Aorta (tissue), 5 donors: ENCODE measurements at regions of chr6 and their contacts with region 1.

Region 1: DNA sequence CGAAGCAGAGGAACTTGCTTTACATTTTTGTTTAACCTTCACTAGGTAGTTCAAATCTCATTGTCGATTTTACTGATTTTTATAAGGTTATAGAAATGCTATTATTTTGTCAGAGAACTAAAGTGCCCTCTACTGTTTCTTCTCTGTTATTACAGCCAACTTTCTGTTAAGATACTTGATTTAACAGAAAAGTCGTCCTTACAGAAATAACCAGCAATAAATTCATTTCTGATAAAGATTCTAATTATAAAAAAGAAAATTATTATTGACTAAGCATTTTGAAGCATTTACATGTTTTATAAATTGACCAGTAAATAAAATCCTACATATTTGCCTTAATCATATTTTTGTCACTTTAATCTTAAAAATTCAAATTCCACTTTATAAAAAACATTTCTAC is 60.8 kb downstream of the OGFRL1 start:
- DNase-seq: no peak
- ATAC-seq: peak; percentile 74
- H3K4me3 ChIP-seq: no peak overlapping the region
- H3K27ac ChIP-seq: no peak overlapping the region
- H3K4me1 ChIP-seq: peaks cover 0 to 13% of the 10 kb centered on the region in 2 donors
- H3K27me3 ChIP-seq: no peaks in the 10 kb centered on the region

Region 2: GRCh38 chr6:71012866-71013469 is 336.4 kb before region 1 on chr6:
- intact Hi-C with region 1: loop called in 1 of 2 experiments (anchors 10 kb)
- DNase-seq: no peak
- ATAC-seq: peak; percentile 77
- H3K4me3 ChIP-seq: no peak overlapping the region
- H3K27ac ChIP-seq: no peak overlapping the region
- H3K4me1 ChIP-seq: no peaks in the 10 kb centered on the region
- H3K27me3 ChIP-seq: no peaks in the 10 kb centered on the region

Region 3: DNA sequence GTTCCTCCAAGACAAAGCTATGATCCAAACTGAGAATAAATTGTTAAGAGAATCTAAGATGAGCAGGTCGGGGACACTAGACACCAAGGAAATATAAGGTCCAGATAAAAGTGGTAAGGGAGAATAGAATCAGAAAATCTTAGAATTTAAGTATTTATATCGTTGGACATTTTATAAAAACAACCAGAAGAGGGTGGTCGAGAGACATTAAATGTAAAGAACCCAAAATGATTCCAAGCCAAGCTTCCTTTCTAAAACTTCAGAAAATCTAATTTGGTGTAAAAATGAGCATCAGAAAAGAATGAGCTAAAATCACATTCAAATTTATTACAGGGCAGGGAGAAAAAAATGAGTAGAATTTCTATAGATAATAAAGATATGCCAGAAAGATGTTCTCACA is 158.6 kb before region 1 on chr6:
- intact Hi-C with region 1: loop called (anchors 2 to 5 kb)
- DNase-seq: no peak
- ATAC-seq: no peak
- H3K4me3 ChIP-seq: no peak overlapping the region
- H3K27ac ChIP-seq: no peak overlapping the region
- H3K4me1 ChIP-seq: peaks cover 0 to 2% of the 10 kb centered on the region in 2 donors
- H3K27me3 ChIP-seq: no peaks in the 10 kb centered on the region

Region 4: DNA sequence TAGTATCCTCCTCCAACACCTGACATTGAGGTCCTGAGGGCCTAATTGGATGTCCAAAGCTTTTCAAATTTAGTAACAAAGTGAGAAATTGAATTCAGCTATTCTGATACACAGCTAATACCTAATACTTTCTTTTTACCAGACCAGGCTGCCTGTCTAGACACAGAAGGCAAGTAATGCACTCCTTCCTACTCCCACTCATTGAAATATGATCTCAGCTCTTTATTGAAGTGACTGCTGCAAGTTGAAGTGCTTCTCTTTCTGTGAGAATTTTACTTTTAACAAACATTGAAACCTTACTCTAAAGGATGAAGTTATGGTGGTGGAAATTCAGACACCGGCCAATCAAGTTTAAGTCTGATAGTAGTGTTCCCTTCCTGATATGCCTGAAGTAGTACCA is 151.6 kb before region 1 on chr6:
- intact Hi-C with region 1: loop called in 1 of 2 experiments (anchors 5 kb)
- DNase-seq: no peak
- ATAC-seq: no peak
- H3K4me3 ChIP-seq: peak overlapping the region in 1 of 2 donors; percentile 5
- H3K27ac ChIP-seq: no peak overlapping the region
- H3K4me1 ChIP-seq: no peaks in the 10 kb centered on the region
- H3K27me3 ChIP-seq: no peaks in the 10 kb centered on the region

Region 5: DNA sequence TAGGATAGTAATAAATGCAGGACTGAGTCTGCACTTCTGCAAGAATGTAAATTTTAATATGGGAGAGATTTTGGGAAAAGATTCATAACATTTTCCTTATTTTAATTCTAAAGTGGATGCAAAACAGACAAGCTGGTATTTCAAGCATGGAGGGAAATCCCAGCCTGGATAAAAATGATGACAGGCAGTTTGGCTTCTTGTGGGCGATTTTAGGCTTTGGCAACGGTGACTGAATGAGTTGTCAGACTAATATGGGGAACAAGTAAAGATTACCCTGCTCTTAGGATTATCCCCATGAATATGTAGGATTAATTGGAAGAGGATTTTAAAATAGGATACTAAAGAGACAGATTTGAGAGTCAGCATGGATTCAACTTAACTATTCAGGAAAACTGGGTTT is 39.7 kb before region 1 on chr6:
- intact Hi-C with region 1: no loop called
- DNase-seq: no peak
- ATAC-seq: no peak
- H3K4me3 ChIP-seq: no peak overlapping the region
- H3K27ac ChIP-seq: no peak overlapping the region
- H3K4me1 ChIP-seq: no peaks in the 10 kb centered on the region
- H3K27me3 ChIP-seq: no peaks in the 10 kb centered on the region

Region 6: GRCh38 chr6:71404145-71404966 is 55.0 kb after region 1 on chr6:
- intact Hi-C with region 1: no loop called
- DNase-seq: no peak
- ATAC-seq: peak; percentile 38
- H3K4me3 ChIP-seq: peak overlapping the region in 1 of 2 donors; percentile 14
- H3K27ac ChIP-seq: no peak overlapping the region
- H3K4me1 ChIP-seq: peaks cover 3 to 6% of the 10 kb centered on the region in 2 donors
- H3K27me3 ChIP-seq: no peaks in the 10 kb centered on the region